ENCODE measurements at regions of chr5 and their contacts with region 1.

Region 1: DNA sequence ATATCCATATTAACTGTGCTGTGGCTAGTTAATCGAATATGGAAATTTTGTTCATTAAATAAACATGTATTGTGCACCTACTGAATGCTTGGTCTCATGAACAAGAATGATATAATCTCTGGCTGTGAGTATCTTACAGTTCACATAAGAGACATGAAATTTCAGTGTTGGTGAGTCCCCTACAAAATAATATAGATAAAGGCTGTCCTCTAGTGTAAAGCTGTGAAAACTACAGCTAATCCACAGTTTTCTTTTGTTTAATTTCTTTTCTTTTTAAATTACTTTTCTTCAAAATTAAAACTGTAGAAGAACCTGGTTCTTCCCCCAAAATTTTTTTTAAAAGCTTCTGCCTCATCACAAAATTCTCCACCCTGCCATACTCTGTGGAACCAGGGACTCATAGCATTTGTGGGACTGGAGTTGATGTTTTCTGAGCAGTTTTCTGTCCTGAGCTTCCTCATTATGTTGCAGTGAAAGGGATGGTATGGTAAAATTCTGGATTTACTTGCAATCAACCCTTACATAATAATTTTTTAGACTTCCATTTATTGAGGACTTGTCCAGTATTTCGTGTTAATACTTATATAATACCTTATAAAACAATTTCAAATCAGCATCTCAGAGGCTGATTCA is 135.0 kb downstream of the STK32A start:
- DNase-seq: peak; percentile 36
- H3K4me3 Mint-ChIP-seq: no peak overlapping the region
- H3K27ac Mint-ChIP-seq: no peak overlapping the region
- H3K4me1 Mint-ChIP-seq: no peaks in the 10 kb centered on the region
- H3K27me3 Mint-ChIP-seq: no peaks in the 10 kb centered on the region
- CTCF ChIP-seq: peak; percentile 88

Region 2: DNA sequence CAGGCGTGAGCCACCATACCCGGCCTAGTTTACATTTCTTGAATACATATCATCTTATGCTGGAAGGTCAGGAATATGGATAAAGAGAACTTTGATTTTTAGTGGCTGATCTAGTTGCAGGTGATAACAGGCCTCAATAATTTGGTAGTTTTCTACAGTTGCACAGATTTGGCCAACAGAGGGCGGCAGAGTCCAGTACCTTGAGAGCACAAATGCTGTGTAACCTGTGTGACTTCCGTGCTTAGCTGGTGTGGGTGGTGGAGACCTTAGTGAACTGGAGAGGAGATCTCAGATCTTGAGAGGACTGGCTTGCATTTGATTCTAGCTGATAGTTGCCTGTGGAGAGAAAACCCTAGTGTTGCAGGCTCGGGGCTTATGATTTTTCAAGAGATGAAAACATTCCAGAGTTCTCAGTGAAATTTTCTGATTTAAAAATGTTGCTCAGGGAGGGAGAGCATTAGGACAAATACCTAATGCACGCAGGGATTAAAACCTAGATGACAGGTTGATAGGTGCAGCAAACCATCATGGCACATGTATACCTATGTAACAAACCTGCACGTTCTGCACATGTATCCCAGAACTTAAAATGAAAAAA is 836.5 kb before region 1 on chr5:
- CTCF ChIA-PET with region 1: interaction called, 29 read pairs
- POLR2A ChIA-PET with region 1: no interaction called
- intact Hi-C with region 1: no loop called
- DNase-seq: peak; percentile 90
- H3K4me3 Mint-ChIP-seq: no peak overlapping the region
- H3K27ac Mint-ChIP-seq: no peak overlapping the region
- H3K4me1 Mint-ChIP-seq: peaks cover 8% of the 10 kb centered on the region
- H3K27me3 Mint-ChIP-seq: no peaks in the 10 kb centered on the region
- CTCF ChIP-seq: peak; percentile 96

Region 3: GRCh38 chr5:147098233-147098790 is 271.5 kb before region 1 on chr5:
- CTCF ChIA-PET with region 1: interaction called, 6 read pairs
- POLR2A ChIA-PET with region 1: no interaction called
- intact Hi-C with region 1: loop called (anchors 1 kb)
- DNase-seq: peak; percentile 69
- H3K4me3 Mint-ChIP-seq: no peak overlapping the region
- H3K27ac Mint-ChIP-seq: peak overlapping the region; percentile 7
- H3K4me1 Mint-ChIP-seq: peaks cover 13% of the 10 kb centered on the region
- H3K27me3 Mint-ChIP-seq: no peaks in the 10 kb centered on the region
- CTCF ChIP-seq: peak; percentile 61

Region 4: DNA sequence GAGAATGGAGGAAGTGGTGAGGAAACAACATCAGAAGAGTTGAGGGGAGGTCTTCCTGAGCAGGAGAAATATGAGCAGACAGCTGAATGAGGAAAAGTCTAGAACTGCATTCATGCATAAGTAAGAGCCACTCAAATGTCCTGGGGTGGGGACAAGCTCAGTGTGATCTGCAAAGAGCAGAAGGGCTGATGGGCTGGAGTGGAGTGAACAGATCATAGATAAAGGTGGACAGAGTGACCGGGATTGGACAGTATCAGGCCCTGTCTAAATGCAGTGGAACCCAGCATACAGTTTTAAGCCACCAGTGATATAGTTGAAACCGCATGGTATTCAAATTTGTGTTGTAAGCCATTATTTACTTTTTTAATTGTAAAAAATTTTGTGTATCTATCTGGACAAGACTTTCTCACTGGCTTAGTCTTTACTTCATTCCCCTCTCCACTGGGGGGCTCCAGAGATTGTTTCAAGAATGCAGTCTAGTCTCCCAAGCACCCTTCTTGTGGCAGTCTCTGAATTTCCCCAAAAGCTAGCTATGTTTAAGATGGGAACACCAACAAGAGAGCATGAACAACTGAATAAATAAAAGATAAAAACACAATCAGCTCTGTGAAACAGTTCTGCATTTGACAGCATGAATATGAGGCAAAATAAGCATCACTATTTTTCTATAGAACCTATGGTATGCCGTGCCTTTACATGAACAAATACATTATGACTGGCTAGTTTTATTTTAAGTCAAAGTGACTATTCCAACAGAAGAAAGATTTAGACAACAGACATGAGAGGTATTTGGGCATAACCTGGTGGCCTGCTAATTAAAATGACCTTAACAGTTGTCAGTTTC is 145.7 kb before region 1 on chr5:
- CTCF ChIA-PET with region 1: interaction called, 225 read pairs
- POLR2A ChIA-PET with region 1: interaction called, 4 read pairs
- intact Hi-C with region 1: loop called (anchors 1 kb)
- DNase-seq: peak; percentile 78
- H3K4me3 Mint-ChIP-seq: no peak overlapping the region
- H3K27ac Mint-ChIP-seq: no peak overlapping the region
- H3K4me1 Mint-ChIP-seq: peaks cover 7% of the 10 kb centered on the region
- H3K27me3 Mint-ChIP-seq: peaks cover 44% of the 10 kb centered on the region
- CTCF ChIP-seq: peak; percentile 87

Region 5: GRCh38 chr5:147391781-147392180 is 21.9 kb after region 1 on chr5:
- CTCF ChIA-PET with region 1: interaction called, 39 read pairs
- POLR2A ChIA-PET with region 1: no interaction called
- intact Hi-C with region 1: no loop called
- DNase-seq: peak; percentile 89
- H3K4me3 Mint-ChIP-seq: no peak overlapping the region
- H3K27ac Mint-ChIP-seq: no peak overlapping the region
- H3K4me1 Mint-ChIP-seq: no peaks in the 10 kb centered on the region
- H3K27me3 Mint-ChIP-seq: no peaks in the 10 kb centered on the region
- CTCF ChIP-seq: peak; percentile 87

Region 6: DNA sequence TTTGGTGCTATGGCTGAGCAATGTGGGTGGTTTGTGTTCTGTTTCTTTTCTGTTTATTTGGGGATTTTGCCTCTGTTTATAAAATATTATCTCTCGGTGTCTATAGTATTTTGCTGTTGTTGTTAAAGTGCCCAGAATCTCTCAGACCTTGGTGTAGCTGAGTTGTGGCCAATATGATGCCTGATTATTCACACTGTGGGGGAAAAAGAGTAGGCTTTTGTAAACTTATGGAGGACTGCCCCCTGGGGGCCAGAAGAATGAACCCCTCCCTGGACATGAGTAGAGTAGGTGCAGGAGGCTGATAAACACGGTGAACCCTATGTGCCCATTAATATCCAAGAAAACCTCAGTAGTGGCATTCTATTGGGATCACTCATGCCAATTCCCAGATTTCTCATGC is 189.0 kb after region 1 on chr5:
- CTCF ChIA-PET with region 1: interaction called, 3 read pairs
- POLR2A ChIA-PET with region 1: no interaction called
- intact Hi-C with region 1: loop called (anchors 1 kb)
- DNase-seq: peak; percentile 74
- H3K4me3 Mint-ChIP-seq: no peak overlapping the region
- H3K27ac Mint-ChIP-seq: no peak overlapping the region
- H3K4me1 Mint-ChIP-seq: peaks cover 5% of the 10 kb centered on the region
- H3K27me3 Mint-ChIP-seq: no peaks in the 10 kb centered on the region
- CTCF ChIP-seq: peak; percentile 81

Region 7: GRCh38 chr5:147690595-147690994 is 320.7 kb after region 1 on chr5:
- CTCF ChIA-PET with region 1: no interaction called
- POLR2A ChIA-PET with region 1: no interaction called
- intact Hi-C with region 1: no loop called
- DNase-seq: peak; percentile 64
- H3K4me3 Mint-ChIP-seq: no peak overlapping the region
- H3K27ac Mint-ChIP-seq: no peak overlapping the region
- H3K4me1 Mint-ChIP-seq: no peaks in the 10 kb centered on the region
- H3K27me3 Mint-ChIP-seq: peaks cover 54% of the 10 kb centered on the region
- CTCF ChIP-seq: peak; percentile 26

Measured in MCF 10A (cell line).